ENCODE measurements at regions of chr12 and their contacts with region 1.

Region 1: DNA sequence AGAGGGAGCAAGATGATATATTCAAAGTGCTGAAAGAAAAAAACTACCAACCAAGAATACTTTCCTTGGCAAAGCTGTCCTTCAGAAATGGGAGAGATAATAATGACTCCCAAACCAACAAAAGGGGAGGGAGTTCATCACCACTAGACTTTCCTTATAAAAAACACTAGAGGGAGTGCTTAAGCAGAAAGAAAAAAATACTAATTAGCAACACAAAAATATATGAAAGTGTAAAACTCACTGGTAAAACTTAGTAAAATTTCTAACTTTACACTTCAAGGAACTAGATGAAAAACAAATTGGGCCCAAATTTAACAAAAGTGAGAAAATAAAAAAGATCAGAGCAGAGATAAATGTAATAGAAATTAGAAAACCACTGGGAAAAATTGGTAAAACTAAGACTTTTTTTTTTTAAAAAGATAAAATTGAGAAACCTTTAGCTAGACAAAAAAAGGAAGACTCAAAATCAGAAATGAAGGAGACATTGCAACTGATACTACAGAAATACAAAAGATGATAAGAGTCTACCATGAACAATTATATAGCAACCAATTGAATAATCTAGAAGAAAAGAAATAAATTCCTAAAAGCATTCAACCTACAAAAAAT is 60.4 kb upstream of the FAR2 start:
- DNase-seq: no peak
- H3K4me3 ChIP-seq: no peak overlapping the region
- H3K27ac ChIP-seq: no peak overlapping the region
- H3K4me1 ChIP-seq: 0 out of 7 replicates have a peak, but pooled peaks cover 0 to 3% (median 0%) of the 10 kb centered on the region in 4 experiments
- H3K27me3 ChIP-seq: no peaks in the 10 kb centered on the region
- CTCF ChIP-seq: peak in 2 of 3 experiments; percentile 16 to 33; a peak in 2 of 4 replicates
- EP300 ChIP-seq: no peak
- POLR2A ChIP-seq: no peak
- RAD21 ChIP-seq: peak; percentile 38 to 52

Region 2: GRCh38 chr12:29309320-29309902 is 220.7 kb after region 1 on chr12:
- CTCF ChIA-PET with region 1: interaction called, 14 read pairs
- POLR2A ChIA-PET with region 1: no interaction called
- DNase-seq: no peak
- H3K4me3 ChIP-seq: no peak overlapping the region
- H3K27ac ChIP-seq: no peak overlapping the region
- H3K4me1 ChIP-seq: no peaks in the 10 kb centered on the region
- H3K27me3 ChIP-seq: no peaks in the 10 kb centered on the region
- CTCF ChIP-seq: peak in 1 of 3 experiments; percentile 20; a peak in 2 of 4 replicates
- EP300 ChIP-seq: no peak
- POLR2A ChIP-seq: no peak
- RAD21 ChIP-seq: peak in 1 of 2 experiments; percentile 30; a peak in 3 of 4 replicates